Activated CD4-positive, alpha-beta T cell treated with anti-CD3 and anti-CD28 coated beads for 36 hours (primary cell): ENCODE measurements at regions of chr12 and their contacts with region 1.

Region 1: DNA sequence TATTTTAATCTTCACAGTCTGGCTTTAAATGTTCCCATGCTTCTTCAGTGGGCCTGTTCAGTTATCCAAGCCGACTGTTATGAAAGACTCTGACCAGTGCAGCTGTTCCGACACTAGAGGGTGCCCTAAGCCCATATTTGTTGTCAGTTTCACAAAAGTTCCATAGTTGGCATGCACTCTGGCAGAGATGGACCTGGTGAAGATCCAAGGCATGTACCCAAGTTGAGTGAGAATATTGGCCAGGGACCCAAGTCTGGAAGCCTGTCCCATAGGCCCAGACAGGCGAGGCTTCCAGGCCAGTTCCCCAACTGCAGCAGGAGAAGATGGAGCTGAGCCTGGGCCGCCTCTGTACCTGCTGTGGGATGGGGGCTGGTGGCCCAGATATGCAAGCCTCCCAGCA is 27.4 kb upstream of the GUCY2C start:
- DNase-seq: peak; percentile 72
- ATAC-seq: peak; percentile 80
- H3K4me3 Mint-ChIP-seq: no peak overlapping the region
- H3K27ac Mint-ChIP-seq: no peak overlapping the region
- H3K4me1 Mint-ChIP-seq: no peaks in the 10 kb centered on the region
- H3K27me3 Mint-ChIP-seq: peaks cover 5% of the 10 kb centered on the region

Region 2: DNA sequence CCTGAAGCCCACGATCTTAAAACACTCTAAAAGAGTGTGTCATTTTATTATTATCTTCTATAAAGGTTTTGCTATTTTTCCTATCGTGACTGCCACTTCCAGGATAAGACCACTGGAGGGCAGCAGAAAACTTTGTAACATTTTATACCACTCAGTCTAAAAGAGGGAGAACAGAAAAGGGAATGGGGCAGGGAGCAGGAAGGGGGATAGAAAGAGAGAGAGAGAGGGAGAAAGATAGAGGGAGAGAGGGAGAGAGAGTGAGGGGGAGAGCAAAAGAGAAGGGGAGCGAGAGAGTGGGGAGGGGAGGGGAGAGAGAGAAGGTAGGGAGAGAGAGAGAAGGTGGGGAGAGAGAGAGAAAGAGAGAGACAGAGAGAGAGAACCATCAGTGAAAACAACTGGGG is 121.6 kb after region 1 on chr12:
- CTCF ChIA-PET with region 1: interaction called, 5 read pairs
- POLR2A ChIA-PET with region 1: no interaction called
- intact Hi-C with region 1: loop called (anchors 1 to 2 kb)
- DNase-seq: peak; percentile 46
- ATAC-seq: peak; percentile 58
- H3K4me3 Mint-ChIP-seq: no peak overlapping the region
- H3K27ac Mint-ChIP-seq: no peak overlapping the region
- H3K4me1 Mint-ChIP-seq: peaks cover 11% of the 10 kb centered on the region
- H3K27me3 Mint-ChIP-seq: no peaks in the 10 kb centered on the region